Dorsolateral prefrontal cortex (tissue), 120 donors: ENCODE measurements at regions of chr1 and their contacts with region 1.

Region 1: DNA sequence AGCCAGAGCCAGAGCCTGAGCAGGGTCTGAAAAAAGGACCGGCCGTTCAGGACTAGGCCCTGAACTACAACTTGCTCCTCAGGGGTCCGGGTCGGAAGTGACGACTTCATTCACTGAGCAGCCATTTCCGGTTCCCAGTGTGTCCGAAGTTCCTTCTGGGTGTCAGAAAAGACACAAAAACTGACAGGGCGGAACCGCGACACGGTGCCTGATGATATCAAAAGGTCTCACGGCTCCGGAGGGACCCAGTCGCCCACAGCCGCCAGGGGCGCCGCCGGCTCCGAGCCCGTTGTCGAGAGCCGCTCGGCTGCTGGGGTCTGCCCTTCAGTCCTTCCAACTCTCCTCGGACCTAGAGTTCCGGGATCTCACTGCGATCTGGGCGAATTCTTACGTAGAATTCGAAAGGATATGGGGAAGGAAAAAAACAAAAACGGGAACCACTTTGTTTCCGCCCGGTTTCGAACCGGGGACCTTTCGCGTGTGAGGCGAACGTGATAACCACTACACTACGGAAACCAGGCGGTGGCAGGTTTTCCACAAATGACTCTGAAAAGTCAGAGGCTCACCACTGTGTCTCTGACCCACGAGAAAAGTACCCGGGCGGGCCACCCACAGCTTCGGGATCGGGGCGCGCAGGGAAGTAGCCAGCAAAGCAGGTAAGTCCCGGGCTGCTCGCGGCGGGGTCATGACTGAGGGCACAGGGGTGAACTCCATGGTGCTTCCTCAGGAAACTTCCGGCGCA is 31.8 kb upstream of the CFAP126 start:
- DNase-seq: peak; percentile 74 to 94 (median 90)
- H3K4me3 ChIP-seq: peak overlapping the region; percentile 68 to 100 (median 88)
- H3K27ac ChIP-seq: peak overlapping the region; percentile 91 to 100 (median 100)
- H3K27me3 ChIP-seq: no peaks in the 10 kb centered on the region
- CTCF ChIP-seq: peak in 49 of 56 donors; percentile 13 to 62 (median 42)

Region 2: DNA sequence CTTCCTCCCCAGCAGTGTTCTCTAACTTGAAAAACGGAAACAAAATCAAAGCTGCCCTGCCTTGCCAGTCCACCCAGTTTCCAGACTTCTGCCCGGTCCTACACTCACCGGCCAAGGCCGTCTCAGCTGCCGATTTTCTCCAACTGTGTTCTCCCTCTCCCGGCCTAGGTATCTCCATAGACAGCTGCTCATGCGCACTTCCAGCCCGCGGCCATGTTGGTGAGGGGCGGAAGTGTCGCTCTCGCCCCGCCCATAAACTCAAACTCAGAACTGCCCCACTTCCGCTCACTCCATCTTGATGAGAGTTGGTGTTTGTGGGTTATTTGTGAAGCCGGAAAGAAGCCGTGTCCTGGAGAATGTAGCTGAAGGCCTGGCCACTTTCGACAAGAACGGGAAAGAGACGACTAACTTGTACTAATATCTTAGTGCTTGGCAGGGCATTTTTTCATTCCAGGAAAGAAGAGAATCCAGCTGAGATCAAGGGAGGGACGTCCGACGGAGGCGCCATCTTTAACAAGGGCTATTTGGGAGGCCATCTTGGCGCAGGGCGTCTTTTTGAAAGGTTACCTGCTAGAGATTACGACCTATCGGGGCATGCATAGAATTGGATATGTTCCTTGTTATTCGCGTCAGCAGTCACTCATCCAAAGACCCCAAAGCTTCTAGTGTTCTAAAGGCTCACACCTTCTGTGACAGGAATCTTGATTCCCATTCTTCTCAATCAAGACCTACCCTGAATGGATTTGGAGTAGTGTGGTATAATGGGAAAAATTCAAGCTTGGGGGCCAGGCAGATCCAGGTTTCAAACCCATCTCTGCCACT is 353.5 kb before region 1 on chr1 and contains the start of gene USF1:
- intact Hi-C with region 1: loop called in 1 of 2 experiments (anchors 10 kb)
- DNase-seq: peak; percentile 84 to 94 (median 92)
- H3K4me3 ChIP-seq: peak within 1 kb of the TSS; percentile 62 to 98 (median 92)
- H3K27ac ChIP-seq: peak within 1 kb of the TSS; percentile 88 to 100 (median 98)
- H3K27me3 ChIP-seq: no peaks in the 10 kb centered on the region
- CTCF ChIP-seq: peak in 27 of 56 donors; percentile 5 to 53 (median 23)
- total RNA-seq, gene USF1: 46.0 to 87.0 (median 63.2) TPM

Region 3: GRCh38 chr1:161506336-161507223 is 107.2 kb after region 1 on chr1:
- intact Hi-C with region 1: no loop called
- DNase-seq: no peak
- H3K4me3 ChIP-seq: peak overlapping the region in 41 of 59 donors; percentile 1 to 54 (median 28)
- H3K27ac ChIP-seq: peak overlapping the region in 29 of 59 donors; percentile 7 to 78 (median 47)
- H3K27me3 ChIP-seq: peaks cover 0 to 38% (median 4%) of the 10 kb centered on the region in 45 donors
- CTCF ChIP-seq: no peak

Region 4: DNA sequence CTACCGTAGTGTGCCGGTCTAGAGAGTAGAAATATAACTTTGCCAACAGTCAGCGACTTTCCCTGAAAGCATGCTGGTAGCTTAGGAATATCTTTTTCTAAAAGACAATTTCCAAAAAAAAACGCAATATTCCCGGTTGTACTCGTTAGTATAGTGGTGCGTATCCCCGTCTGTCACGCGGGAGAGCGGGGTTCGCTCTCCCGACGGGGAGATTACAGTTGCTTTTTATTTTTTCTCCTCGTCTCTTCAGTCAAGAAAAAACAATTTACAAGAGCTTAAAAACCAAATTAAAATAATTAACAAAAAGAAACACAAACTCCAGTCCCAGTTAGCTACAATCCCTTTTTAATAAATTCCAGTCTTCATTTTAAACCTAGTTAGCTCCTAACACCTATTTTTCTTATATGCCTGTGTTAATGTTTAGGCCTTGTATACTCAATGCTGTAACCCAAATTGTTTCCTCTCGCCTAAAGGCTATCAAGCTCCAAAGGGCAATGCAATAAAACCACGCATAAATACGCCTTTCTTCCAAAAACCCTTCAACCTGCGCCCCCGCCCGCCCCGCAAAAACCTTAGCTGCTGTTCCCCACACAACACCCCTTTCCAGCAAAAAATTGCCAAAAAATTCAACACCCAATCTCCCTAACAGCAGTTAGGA is 132.7 kb after region 1 on chr1:
- intact Hi-C with region 1: loop called in 1 of 2 experiments (anchors 5 kb)
- DNase-seq: no peak
- H3K4me3 ChIP-seq: peak overlapping the region; percentile 26 to 88 (median 69)
- H3K27ac ChIP-seq: peak overlapping the region in 57 of 59 donors; percentile 63 to 99 (median 94)
- H3K27me3 ChIP-seq: no peaks in the 10 kb centered on the region
- CTCF ChIP-seq: peak in 1 of 56 donors; percentile 4

Region 5: DNA sequence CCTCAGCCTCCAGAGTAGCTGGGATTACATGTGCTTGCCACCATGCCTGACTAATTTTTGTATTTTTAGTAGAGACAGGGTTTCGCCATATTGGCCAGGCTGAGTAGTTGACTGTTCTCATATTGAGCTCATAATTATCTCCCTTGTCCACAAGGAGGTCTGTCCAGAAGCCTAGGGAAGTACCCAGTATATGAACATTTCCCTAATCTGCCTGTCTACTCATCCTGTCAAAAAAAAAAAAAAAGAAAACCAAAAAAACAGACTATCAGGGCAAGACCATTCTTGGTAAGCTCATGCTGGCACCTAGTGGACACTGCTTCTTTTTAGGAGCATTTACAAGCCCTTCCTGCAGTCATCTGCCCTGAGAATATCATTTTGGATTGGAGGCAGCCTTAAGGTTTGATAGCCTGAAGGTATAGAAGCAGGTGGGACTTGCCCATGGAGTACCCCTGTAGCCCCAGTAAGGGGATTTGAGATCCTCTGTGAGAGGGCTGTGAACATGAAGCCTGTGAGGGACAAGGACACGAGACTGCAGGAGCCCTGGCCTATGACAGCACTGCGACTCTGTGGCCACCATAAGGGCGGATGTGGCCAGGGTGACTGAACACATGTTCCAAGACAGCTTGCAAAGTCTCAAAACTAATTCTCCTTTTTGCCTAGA is 339.3 kb after region 1 on chr1:
- intact Hi-C with region 1: loop called (anchors 10 kb)
- DNase-seq: peak in 2 of 10 donors; percentile 29 to 33
- H3K4me3 ChIP-seq: no peak overlapping the region
- H3K27ac ChIP-seq: peak overlapping the region in 21 of 59 donors; percentile 5 to 58 (median 35)
- H3K27me3 ChIP-seq: peaks cover 0 to 5% (median 0%) of the 10 kb centered on the region in 45 donors
- CTCF ChIP-seq: peak in 49 of 56 donors; percentile 10 to 63 (median 40)

Region 6: DNA sequence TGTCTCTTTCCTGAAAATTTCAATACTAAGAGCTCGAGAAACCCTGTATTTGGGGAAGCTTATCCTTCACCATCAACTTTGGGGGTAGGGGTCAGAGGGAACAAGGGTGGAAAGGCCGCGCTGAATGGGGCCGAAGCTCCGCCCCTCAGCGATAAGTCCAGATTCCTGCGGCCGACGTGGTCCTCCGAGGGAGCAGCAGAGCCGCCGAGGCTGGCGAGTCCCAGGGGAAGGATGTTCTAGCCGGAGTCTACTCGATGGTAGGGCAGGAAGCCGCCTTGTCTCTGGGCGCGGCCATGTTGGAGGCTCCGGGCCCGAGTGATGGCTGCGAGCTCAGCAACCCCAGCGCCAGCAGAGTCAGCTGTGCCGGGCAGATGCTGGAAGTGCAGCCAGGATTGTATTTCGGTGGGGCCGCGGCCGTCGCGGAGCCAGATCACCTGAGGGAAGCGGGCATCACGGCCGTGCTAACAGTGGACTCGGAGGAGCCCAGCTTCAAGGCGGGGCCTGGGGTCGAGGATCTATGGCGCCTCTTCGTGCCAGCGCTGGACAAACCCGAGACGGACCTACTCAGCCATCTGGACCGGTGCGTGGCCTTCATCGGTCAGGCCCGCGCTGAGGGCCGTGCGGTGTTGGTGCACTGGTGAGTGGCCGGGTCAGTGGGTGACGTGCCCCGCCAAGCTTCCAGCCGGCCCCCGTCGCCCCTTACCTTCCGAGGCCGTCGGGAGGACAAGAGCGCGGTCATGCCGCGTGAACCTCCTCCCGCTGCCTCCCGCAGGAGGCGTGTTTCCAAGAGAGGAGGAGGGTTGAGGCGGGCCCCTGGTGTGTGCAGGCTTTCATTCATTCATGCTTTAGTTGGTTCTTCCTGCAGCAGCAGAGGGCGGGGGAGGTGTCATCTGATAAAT is 350.3 kb after region 1 on chr1 and contains the start of gene DUSP12:
- intact Hi-C with region 1: loop called in 1 of 2 experiments (anchors 10 kb)
- DNase-seq: peak; percentile 82 to 96 (median 94)
- H3K4me3 ChIP-seq: peak within 1 kb of the TSS; percentile 66 to 100 (median 91)
- H3K27ac ChIP-seq: peak within 1 kb of the TSS; percentile 26 to 98 (median 93)
- H3K27me3 ChIP-seq: no peaks in the 10 kb centered on the region
- CTCF ChIP-seq: peak in 53 of 56 donors; percentile 17 to 67 (median 40)
- total RNA-seq, gene DUSP12: 12.6 to 34.3 (median 21.6) TPM